Activated T-helper 1 cell treated with anti-CD3 and anti-CD28 coated beads, Interleukin-12 subunit alpha, Interleukin-12 subunit beta, Interleukin-2, Interleukin-4 antibody, amounts not matched to agents 30 ng/mL and 10 ng/mL and 1 ng/mL, durations not matched to agents 14 hours and 24 hours and 36 hours (primary cell): ENCODE measurements at regions of chr19 and their contacts with region 1.

Region 1: GRCh38 chr19:4867534-4868285 is at the start of gene PLIN3:
- DNase-seq: peak; percentile 86
- H3K4me3 Mint-ChIP-seq: peak within 1 kb of the TSS; percentile 85
- H3K27ac Mint-ChIP-seq: peak within 1 kb of the TSS; percentile 55
- H3K4me1 Mint-ChIP-seq: peaks cover 31% of the 10 kb centered on the region
- H3K27me3 Mint-ChIP-seq: peaks cover 6% of the 10 kb centered on the region
- total RNA-seq, gene PLIN3: 33.1 and 33.2 TPM in 2 replicates

Region 2: DNA sequence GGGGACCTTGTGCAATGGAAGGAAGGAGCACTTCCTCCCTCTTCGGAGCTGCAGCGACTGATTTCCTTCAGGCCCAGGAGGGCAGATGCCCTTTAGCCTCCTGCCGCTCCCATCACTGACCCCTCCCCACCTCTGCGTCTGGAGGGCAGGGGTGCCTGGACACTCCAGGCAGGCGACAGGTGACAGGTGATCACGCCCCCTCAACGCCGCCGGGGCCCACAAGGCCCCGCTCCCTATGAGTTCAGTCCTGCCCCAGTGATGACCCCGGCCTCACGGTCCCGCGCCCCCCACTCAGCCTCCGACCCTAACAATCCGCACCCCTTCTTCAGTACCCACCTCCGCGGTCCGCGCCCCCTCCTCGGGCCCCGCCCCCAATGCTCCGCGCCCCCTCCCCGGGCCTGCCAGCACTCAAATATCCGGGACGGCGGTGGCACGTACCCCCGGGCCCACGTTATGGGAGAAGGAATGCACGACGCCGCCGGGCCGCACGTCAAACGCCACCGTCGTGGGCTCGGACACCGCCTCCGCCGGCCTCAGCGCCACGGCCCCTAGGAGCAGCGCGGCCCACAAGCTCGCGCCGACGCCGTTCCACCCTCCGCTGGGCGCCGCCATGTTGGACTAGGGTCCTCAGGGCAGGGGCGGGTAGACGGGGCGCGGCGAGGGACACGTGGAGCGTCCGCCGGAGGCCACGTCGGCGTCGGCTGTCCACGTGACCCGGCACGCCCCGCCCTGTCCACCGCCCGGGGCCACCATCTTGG is 197.8 kb before region 1 on chr19 and contains the start of gene MYDGF:
- intact Hi-C with region 1: loop called (anchors 1 kb)
- DNase-seq: peak; percentile 91
- H3K4me3 Mint-ChIP-seq: peak within 1 kb of the TSS; percentile 91
- H3K27ac Mint-ChIP-seq: peak within 1 kb of the TSS; percentile 77
- H3K4me1 Mint-ChIP-seq: peaks cover 5% of the 10 kb centered on the region
- H3K27me3 Mint-ChIP-seq: no peaks in the 10 kb centered on the region
- total RNA-seq, gene MYDGF: 97.1 and 98.0 TPM in 2 replicates

Region 3: GRCh38 chr19:4791170-4792018 is 76.3 kb before region 1 on chr19 and contains the start of gene FEM1A:
- intact Hi-C with region 1: loop called (anchors 1 kb)
- DNase-seq: peak; percentile 98
- H3K4me3 Mint-ChIP-seq: peak within 1 kb of the TSS; percentile 89
- H3K27ac Mint-ChIP-seq: peak within 1 kb of the TSS; percentile 88
- H3K4me1 Mint-ChIP-seq: peaks cover 9% of the 10 kb centered on the region
- H3K27me3 Mint-ChIP-seq: no peaks in the 10 kb centered on the region
- total RNA-seq, gene FEM1A: 23.8 and 24.8 TPM in 2 replicates

Region 4: DNA sequence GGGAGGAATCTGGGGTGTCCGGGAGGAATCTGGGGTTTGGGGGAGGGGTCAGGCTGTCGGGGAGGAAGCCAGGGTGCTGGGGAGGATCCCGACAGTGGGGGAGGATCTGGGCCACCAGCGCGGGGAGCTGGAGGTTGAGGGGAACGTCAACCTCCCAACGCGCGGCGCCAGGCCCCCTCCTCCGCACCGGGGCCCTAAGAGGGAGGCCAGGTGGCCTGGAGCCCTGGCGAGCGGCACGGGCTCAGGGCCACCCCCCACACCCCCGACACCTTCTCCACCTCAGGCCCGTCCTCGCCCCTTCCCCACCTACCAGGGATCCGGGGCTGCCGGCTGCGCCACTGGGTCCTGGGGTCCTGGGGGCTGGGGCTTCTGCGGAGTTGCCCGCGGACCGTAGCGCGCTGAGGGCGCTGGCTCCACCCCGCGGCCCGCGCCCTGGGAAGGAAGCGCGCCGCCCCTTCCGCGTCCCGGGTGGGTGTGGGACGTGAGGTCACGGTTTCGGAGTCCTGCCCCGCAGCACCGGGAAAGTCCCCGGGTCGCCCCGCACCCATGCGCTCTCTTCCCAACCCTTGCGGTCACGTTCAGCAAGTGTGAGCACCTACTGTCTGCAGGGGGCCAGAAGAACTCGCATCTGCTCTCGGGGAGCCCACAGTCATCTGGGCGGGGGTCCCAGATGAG is 36.3 kb before region 1 on chr19 and contains the start of gene TICAM1:
- intact Hi-C with region 1: loop called (anchors 2 kb)
- DNase-seq: peak; percentile 85
- H3K4me3 Mint-ChIP-seq: peak within 1 kb of the TSS; percentile 91
- H3K27ac Mint-ChIP-seq: peak within 1 kb of the TSS; percentile 94
- H3K4me1 Mint-ChIP-seq: peaks cover 22% of the 10 kb centered on the region
- H3K27me3 Mint-ChIP-seq: no peaks in the 10 kb centered on the region
- total RNA-seq, gene TICAM1: 31.2 and 33.3 TPM in 2 replicates

Region 5: DNA sequence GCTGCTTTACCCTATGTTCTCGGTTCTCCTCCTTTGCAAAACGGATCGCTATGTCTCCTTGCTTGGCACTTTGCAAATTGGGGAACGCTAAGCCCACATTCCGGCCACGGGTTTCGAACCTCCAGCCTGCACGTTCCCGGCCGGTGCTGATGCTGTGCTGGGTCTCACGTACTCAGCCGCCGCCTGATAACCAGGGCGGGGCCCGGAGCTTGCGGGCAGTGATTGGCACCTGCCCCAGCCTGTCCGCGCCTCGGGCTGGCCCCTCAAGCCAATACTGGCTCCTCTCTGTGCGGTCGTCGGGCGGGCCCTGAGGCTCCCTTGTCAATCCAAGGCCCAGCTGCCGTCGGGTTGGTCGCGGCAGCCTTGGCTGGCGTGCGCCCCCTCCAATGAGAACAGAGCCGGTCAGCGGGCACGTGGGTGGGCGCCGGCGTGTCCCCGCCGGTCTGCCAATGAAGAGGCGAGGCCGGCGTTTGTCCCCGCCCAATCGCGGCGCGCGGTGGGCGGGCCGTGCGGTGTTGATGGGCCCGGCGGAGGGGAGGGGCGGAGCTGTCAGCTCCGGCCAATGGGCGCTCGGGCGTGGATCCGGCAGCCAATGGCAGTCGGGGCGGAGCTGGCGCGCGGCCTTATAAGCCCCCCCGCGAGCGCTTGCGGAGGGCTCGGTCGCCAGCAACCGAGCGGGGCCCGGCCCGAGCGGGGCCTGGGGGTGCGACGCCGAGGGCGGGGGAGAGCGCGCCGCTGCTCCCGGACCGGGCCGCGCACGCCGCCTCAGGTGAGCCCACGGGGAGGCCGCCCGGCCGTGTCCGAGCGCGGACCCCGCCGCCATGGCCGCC is 101.0 kb after region 1 on chr19 and contains the start of gene KDM4B:
- intact Hi-C with region 1: loop called (anchors 1 kb)
- DNase-seq: peak; percentile 100
- H3K4me3 Mint-ChIP-seq: peak within 1 kb of the TSS; percentile 94
- H3K27ac Mint-ChIP-seq: peak within 1 kb of the TSS; percentile 93
- H3K4me1 Mint-ChIP-seq: peaks cover 43% of the 10 kb centered on the region
- H3K27me3 Mint-ChIP-seq: no peaks in the 10 kb centered on the region
- total RNA-seq, gene KDM4B: 38.9 and 45.0 TPM in 2 replicates